A673 (cell line): ENCODE measurements at regions of chr5 and their contacts with region 1.

Region 1: DNA sequence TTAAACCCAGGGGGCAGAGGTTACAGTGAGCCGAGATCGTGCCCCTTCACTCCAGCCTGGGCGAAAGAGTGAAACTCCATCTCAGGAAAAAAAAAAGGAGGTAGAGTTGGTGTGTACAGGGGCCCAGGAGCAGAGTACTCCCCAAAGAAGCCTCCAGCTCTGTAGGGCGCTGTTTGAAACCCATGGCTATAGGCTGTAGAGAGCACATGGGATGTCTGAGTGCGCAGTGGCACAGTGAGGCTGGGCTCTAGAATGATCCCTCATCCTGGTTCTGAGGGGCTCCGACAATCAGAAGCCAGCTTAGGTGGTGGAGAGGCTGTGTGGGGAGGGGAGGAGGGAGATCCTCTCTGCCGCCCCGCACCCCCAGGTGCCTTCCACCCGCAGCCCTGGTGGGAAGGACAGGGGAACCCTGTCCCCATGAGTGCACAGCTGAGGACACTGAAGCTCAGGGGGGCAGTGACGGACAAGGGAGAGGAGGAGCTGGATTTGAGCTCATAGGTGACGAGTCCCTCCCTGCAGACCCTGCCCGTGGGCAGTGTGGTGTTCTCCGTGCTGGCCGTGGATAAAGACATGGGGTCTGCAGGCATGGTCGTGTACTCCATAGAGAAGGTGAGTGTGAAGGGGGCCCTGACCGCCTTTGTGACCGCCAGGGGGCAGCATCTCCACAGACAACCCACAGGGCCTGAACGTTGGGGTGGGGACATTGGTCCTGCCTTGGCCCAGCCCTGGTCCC is 24.6 kb downstream of the CDHR2 start:
- DNase-seq: peak; percentile 60
- H3K4me3 ChIP-seq: no peak overlapping the region
- H3K27ac ChIP-seq: no peak overlapping the region
- H3K4me1 ChIP-seq: no peaks in the 10 kb centered on the region
- H3K27me3 ChIP-seq: no peaks in the 10 kb centered on the region
- CTCF ChIP-seq: peak; percentile 86

Region 2: GRCh38 chr5:176415952-176416924 is 157.5 kb before region 1 on chr5 and contains the start of gene CLTB:
- CTCF ChIA-PET with region 1: no interaction called
- POLR2A ChIA-PET with region 1: no interaction called
- intact Hi-C with region 1: loop called (anchors 5 kb)
- DNase-seq: peak; percentile 77
- H3K4me3 ChIP-seq: peak within 1 kb of the TSS; percentile 82
- H3K27ac ChIP-seq: peak within 1 kb of the TSS; percentile 73
- H3K4me1 ChIP-seq: peaks cover 6% of the 10 kb centered on the region
- H3K27me3 ChIP-seq: no peaks in the 10 kb centered on the region
- CTCF ChIP-seq: peak; percentile 32; the same call in 1 of the 2 replicates
- total RNA-seq, gene CLTB: 48.9 and 61.8 TPM in 2 replicates

Region 3: DNA sequence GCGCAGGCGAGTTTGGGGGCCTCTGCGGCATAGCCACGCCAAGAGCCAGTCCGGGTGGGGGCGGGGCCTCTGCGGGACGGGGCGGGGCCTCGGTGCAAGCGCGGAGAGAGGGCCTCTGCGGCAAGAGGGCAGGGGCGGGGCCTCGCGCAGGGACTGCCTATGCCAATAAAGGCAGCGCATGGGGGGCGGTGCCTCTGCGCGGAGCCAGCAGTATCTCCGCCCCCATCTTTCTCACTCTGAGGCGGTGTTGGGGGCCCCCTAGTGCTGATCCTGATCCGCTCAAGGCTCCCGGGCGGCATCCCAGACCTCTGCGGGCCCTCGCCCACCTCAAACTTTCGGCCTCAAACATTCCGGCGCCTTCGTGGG is 45.5 kb after region 1 on chr5:
- CTCF ChIA-PET with region 1: no interaction called
- POLR2A ChIA-PET with region 1: no interaction called
- intact Hi-C with region 1: loop called (anchors 5 kb)
- DNase-seq: peak; percentile 93
- H3K4me3 ChIP-seq: peak overlapping the region; percentile 25
- H3K27ac ChIP-seq: no peak overlapping the region
- H3K4me1 ChIP-seq: peaks cover 4% of the 10 kb centered on the region
- H3K27me3 ChIP-seq: peaks cover 21% of the 10 kb centered on the region
- CTCF ChIP-seq: peak; percentile 67

Region 4: DNA sequence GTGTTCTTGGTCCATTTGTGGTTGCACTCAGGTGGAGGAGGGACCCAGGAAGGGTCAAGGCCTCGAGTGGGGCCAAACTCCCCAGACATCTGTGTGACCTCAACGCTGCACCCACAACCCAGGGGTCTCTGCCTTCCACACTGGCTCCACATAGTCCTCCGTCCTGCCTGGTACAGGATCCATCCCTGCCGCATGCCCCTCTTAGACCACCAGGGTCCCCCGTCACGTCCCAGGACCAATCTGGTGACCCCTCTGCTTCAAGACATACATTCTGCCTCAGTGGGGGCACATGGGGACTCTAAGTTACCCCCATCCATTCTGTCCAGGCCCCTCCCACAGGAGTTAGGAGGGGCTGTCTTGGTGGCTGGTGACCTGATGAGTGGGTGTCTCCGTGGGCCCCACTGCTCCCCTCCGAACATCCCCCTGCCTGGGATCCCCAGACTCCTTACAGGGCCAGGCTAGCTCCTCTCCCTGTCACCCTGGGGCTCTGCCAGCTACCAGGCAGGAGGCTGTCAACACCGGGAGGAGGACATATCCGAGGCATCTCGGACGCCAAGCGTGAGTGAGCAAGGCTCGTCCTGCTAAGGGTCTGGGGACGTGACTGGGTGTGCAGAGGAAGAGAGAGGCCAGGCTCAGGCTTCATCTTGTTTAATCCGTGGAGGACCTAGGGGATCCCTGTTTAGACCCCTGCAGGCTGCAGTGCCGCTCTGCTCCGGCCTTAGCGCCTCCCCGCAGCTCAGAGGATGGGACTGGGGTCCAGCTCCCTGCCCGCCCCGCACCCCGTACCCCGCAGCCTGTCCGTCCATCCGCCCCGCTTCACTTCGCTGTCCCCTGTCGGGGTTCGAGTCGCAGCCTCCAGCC is 105.9 kb after region 1 on chr5:
- CTCF ChIA-PET with region 1: no interaction called
- POLR2A ChIA-PET with region 1: no interaction called
- intact Hi-C with region 1: no loop called
- DNase-seq: no peak
- H3K4me3 ChIP-seq: no peak overlapping the region
- H3K27ac ChIP-seq: no peak overlapping the region
- H3K4me1 ChIP-seq: peaks cover 15% of the 10 kb centered on the region
- H3K27me3 ChIP-seq: no peaks in the 10 kb centered on the region
- CTCF ChIP-seq: no peak

Region 5: GRCh38 chr5:176959051-176959450 is 385.3 kb after region 1 on chr5:
- CTCF ChIA-PET with region 1: no interaction called
- POLR2A ChIA-PET with region 1: interaction called, 6 read pairs
- intact Hi-C with region 1: loop called (anchors 10 kb)
- DNase-seq: peak; percentile 48
- H3K4me3 ChIP-seq: no peak overlapping the region
- H3K27ac ChIP-seq: no peak overlapping the region
- H3K4me1 ChIP-seq: no peaks in the 10 kb centered on the region
- H3K27me3 ChIP-seq: no peaks in the 10 kb centered on the region
- CTCF ChIP-seq: peak; percentile 49